ENCODE measurements at regions of chr1 and their contacts with region 1.

Region 1: DNA sequence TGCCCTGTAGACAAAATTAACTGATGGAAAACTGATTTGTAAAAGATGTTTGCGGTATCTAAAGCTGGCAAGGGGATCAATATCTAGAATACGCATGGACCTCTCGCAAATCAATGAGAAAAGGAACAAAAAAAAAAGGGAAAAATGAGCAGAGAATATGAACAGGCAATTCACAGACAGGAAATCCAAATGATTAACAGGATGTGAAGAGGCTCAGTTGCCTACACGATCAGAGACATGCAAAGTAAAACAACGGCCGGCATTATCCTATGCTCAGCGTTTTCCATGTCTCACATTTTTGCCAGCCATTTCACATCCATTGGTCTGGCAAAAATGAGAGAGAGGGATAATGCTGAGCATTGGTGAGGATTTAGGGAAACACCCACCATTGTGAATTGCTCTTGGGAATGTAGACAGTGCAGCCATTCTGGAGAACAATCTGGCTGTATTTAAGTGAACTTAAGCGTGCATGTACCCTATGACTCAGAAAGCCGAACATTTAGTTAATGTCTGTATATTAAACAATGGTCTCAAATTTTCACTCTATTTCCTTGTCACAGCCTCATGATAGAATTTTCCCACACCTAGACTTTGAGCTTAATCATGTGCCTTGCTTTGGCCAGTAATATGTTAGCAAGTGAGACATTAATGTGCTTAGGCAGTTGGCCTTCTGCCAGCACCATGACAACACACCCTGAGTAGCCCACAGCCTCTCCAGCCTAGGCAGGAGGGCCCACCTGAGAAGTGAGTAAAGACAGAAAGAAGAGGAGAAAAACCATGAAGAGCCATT is 61.0 kb upstream of the NBPF3 start:
- DNase-seq: no peak
- H3K4me3 ChIP-seq: no peak overlapping the region
- H3K27ac ChIP-seq: no peak overlapping the region
- H3K4me1 ChIP-seq: peaks cover under 1 to 7% of the 10 kb centered on the region in 2 donors
- H3K27me3 ChIP-seq: no peaks in the 10 kb centered on the region
- CTCF ChIP-seq: no peak
- POLR2A ChIP-seq: no peak

Region 2: DNA sequence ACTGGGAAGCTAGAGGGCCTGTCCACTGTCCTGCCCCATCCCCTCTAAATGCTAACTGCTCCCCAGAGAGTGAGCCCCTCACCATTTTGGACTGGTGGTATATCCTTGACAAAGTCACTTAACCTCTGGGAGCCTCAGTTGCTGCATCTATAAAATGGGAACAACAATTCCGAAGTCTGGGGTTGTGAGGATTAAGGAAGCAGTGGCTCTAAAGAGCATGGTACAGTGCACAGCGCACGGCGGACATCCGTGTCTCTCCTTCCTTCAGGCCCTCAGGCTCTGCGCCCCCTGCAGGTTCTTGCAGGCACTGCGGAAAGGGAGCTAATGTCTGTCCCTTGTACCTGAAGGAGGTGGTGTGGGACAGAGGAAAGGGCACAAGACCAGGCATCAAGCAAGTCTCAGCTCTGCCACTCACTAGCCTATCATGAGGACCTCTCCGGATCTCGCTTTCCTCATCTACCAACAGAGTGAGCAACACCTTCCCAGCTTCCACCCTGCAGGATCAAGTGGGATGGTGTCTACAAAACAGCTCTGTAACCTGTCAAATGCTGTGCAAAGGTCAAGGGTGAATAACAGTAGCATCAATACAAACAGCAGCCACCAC is 108.7 kb before region 1 on chr1:
- intact Hi-C with region 1: no loop called
- DNase-seq: peak; percentile 56 to 62
- H3K4me3 ChIP-seq: no peak overlapping the region
- H3K27ac ChIP-seq: peak overlapping the region; percentile 63 to 77 (median 76)
- H3K4me1 ChIP-seq: peaks cover 29 to 42% of the 10 kb centered on the region in 2 donors
- H3K27me3 ChIP-seq: no peaks in the 10 kb centered on the region
- CTCF ChIP-seq: peak; percentile 22 to 72 (median 51)
- POLR2A ChIP-seq: no peak

Region 3: DNA sequence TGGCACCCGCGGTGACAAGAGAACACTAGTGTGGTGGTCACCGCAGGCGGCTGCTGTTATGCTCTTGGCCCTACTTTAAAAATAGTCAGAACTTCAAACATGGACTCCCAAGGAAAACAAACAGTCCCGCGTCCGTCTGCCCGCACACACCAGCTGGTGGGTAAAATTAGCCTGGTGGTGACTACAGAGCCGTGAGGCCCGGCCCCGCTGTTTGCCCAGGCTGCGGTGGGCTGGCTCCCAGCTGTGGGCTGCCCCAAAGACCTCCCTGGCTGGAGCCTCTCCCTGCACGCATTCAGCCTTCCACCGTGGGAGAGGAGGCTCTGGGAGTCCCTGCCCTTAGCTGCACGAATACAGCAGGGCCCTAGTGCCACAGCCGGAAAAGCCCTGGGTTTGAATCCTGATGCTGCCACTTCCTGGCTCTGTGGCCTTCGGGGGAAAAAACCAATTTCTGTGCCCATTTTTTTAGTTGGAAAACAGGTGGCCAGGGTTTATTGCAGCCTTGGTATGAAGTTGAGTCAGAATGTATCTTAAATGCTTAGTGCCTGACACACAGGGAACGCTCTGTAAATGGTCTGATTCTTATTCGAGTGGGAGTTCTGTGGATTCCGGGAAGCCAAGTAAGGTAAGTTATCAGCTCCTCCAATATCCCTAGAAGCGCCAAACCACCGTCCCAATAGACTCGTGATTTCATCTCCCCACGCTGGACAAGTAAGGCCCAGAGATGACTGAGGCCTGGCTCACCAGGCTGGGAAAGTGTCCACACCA is 188.5 kb after region 1 on chr1:
- intact Hi-C with region 1: loop called (anchors 10 kb)
- DNase-seq: no peak
- H3K4me3 ChIP-seq: no peak overlapping the region
- H3K27ac ChIP-seq: no peak overlapping the region
- H3K4me1 ChIP-seq: no peaks in the 10 kb centered on the region
- H3K27me3 ChIP-seq: no peaks in the 10 kb centered on the region
- CTCF ChIP-seq: no peak
- POLR2A ChIP-seq: no peak

Measured in thyroid gland (tissue), 4 donors.